BJ (cell line): ENCODE measurements at regions of chr10 and their contacts with region 1.

Region 1: DNA sequence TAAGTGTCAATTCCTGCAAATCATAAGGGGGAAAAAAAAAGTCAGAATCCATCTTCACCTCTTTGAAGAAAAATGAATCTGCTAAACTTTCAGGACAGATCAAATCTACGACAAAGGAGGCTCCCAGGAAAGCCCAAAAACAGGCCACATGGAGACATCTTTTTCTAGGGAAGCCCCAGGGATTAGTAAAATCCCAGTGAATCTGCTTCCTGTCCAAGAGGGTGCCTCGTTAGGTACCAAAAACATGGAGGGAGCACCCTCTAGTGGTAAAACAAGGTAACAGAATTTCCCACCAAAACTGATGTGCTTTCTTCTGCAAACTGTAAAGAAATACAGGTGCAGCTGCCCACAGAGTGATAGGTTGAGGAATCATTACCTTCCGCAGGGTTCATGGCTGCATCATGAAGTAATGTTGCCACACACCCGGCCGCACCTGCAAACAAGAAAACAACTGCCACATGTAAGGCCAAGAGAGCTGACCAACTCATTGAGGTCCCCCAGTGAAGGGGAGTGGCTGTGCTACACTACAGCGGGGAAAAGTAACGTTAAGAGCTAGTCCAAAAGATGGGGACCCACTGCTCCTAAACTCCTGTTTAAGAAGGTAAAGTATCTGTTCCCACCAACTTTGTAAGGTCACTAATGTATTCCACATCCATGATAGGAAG is 7.9 kb downstream of the SLC25A28 start:
- DNase-seq: no peak
- H3K4me3 ChIP-seq: no peak overlapping the region
- H3K27me3 ChIP-seq: no peaks in the 10 kb centered on the region
- CTCF ChIP-seq: peak; percentile 77

Region 2: GRCh38 chr10:99394256-99394655 is 218.0 kb before region 1 on chr10:
- CTCF ChIA-PET with region 1: interaction called, 36 read pairs
- POLR2A ChIA-PET with region 1: no interaction called
- DNase-seq: no peak
- H3K4me3 ChIP-seq: no peak overlapping the region
- H3K27me3 ChIP-seq: no peaks in the 10 kb centered on the region
- CTCF ChIP-seq: no peak

Region 3: DNA sequence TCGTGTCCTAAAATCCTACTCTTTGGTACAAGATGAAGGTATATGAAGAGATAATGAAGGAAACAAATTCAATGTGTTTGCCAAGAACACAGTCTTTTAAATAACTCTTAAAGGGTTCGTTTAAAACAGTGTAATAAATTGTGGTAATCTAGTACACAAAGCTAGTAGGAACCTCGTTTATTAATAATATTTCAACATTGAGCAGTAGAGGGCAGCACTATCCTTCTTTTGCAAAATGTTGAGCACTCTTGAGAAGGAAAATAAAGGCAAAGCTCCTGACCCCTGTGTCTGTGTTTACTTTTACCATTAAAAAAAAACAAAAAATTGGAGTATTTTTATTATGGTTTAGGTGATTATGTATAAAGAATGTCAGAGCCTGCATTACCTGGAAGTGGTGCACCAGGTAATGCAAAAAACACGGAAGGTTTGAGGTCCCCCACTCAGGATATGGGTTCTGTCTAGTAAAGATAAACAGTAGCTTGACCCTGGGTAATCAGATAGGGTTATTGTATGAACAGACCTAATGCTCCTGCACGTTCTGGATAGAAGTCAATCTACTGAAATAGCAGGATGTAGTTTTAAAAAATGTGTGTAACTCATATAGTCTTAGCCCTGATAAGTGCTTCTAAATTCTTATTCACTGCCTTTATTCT is 176.2 kb before region 1 on chr10:
- CTCF ChIA-PET with region 1: interaction called, 44 read pairs
- POLR2A ChIA-PET with region 1: no interaction called
- DNase-seq: peak; percentile 4
- H3K4me3 ChIP-seq: no peak overlapping the region
- H3K27me3 ChIP-seq: no peaks in the 10 kb centered on the region
- CTCF ChIP-seq: peak; percentile 52

Region 4: GRCh38 chr10:99560277-99561126 is 51.8 kb before region 1 on chr10:
- CTCF ChIA-PET with region 1: interaction called, 35 read pairs
- POLR2A ChIA-PET with region 1: no interaction called
- DNase-seq: no peak
- H3K4me3 ChIP-seq: no peak overlapping the region
- H3K27me3 ChIP-seq: peaks cover 13% of the 10 kb centered on the region
- CTCF ChIP-seq: peak; percentile 73

Region 5: GRCh38 chr10:99579616-99580370 is 32.5 kb before region 1 on chr10:
- CTCF ChIA-PET with region 1: interaction called, 13 read pairs
- POLR2A ChIA-PET with region 1: no interaction called
- DNase-seq: no peak
- H3K4me3 ChIP-seq: no peak overlapping the region
- H3K27me3 ChIP-seq: peaks cover 6% of the 10 kb centered on the region
- CTCF ChIP-seq: no peak

Region 6: GRCh38 chr10:99598781-99599509 is 13.4 kb before region 1 on chr10:
- CTCF ChIA-PET with region 1: interaction called, 13 read pairs
- POLR2A ChIA-PET with region 1: no interaction called
- DNase-seq: no peak
- H3K4me3 ChIP-seq: no peak overlapping the region
- H3K27me3 ChIP-seq: peaks cover 2% of the 10 kb centered on the region; the same call in 1 of the 2 replicates
- CTCF ChIP-seq: no peak

Region 7: DNA sequence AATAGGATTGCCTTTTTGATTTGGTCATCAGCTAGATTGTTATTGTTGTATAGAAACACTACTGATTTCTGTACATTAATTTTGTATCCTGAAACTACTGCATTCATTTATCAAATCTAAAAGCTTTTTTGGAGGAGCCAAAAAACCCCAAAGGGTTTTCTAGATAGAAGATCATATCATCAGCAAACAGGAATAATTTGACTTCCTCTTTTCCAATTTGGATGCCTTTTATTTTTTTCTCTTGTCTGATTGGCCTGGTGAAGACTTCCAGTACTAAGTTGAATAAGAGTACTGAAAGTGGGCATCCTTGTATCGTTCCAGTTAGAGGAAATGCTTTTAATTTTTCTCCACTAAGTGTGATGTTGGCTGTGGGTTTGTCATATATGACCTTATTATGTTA is 36.4 kb after region 1 on chr10:
- CTCF ChIA-PET with region 1: no interaction called
- POLR2A ChIA-PET with region 1: no interaction called
- DNase-seq: no peak
- H3K4me3 ChIP-seq: no peak overlapping the region
- H3K27me3 ChIP-seq: no peaks in the 10 kb centered on the region
- CTCF ChIP-seq: no peak

Region 8: DNA sequence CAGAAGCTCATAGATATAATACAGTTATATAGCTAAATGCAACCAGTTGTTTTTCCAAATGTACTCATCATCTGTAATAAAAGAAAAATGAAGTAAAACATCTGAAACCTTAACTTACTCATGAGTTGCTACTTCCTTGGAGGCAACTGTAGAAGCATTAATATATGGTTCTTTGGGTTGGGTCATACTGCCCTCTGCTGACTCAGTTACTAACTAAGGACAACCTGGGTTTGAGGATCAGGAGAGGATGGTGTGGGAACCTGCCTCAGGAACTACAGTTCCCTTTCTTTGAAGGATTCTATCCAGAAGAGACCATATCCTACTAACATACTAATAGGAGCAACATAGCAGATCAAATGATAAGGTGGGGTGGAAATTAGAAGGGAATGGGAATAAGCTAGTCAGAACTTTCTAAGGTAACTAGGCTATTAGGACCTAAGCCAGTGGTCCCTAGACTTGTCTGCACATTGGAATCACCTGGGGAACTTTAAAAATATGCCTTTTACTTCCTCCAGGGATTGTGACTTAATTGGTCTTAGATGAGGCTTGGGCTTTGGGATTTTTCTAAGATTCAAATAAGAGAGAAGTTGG is 98.9 kb after region 1 on chr10:
- CTCF ChIA-PET with region 1: interaction called, 12 read pairs
- POLR2A ChIA-PET with region 1: no interaction called
- DNase-seq: no peak
- H3K4me3 ChIP-seq: no peak overlapping the region
- H3K27me3 ChIP-seq: no peaks in the 10 kb centered on the region
- CTCF ChIP-seq: peak; percentile 64